ENCODE measurements at regions of chr3 and their contacts with region 1.

Region 1: DNA sequence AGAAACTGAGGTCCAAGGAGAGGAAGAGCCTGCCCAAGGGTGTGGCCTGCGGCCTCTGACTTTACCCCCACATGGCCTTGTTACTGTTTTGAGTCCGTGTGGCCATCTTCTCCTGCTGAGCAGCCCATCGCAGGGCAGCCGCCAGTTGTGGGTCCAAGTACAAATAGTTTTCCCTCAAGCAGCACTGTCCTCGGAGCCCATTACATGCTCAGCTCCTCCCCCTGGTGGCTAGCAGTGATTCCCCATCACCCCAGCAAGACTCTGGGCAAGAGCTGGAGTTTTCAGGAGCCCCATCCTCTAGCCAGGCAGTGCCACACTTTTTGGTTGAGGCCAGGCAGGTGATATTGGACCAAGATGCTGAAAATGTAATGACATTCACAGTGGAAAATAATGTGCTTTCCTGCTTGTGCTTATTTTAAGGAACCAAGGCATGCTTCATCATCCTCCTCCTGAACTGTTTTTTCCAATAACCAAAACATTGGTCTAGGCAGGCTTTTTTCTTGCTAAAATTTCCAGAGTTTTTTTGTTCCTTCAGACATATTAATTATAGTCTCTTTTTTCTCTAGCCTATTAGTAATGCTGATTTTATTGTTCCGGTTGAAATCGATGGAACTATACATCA is 23.2 kb upstream of the VILL start:
- DNase-seq: peak; percentile 56
- ATAC-seq: peak; percentile 83
- H3K4me3 ChIP-seq: no peak overlapping the region
- H3K27ac ChIP-seq: no peak overlapping the region
- H3K4me1 ChIP-seq: peaks cover 51% of the 10 kb centered on the region
- H3K27me3 ChIP-seq: no peaks in the 10 kb centered on the region
- CTCF ChIP-seq: peak; percentile 88
- EP300 ChIP-seq: no peak
- POLR2A ChIP-seq: no peak
- RAD21 ChIP-seq: peak; percentile 87

Region 2: DNA sequence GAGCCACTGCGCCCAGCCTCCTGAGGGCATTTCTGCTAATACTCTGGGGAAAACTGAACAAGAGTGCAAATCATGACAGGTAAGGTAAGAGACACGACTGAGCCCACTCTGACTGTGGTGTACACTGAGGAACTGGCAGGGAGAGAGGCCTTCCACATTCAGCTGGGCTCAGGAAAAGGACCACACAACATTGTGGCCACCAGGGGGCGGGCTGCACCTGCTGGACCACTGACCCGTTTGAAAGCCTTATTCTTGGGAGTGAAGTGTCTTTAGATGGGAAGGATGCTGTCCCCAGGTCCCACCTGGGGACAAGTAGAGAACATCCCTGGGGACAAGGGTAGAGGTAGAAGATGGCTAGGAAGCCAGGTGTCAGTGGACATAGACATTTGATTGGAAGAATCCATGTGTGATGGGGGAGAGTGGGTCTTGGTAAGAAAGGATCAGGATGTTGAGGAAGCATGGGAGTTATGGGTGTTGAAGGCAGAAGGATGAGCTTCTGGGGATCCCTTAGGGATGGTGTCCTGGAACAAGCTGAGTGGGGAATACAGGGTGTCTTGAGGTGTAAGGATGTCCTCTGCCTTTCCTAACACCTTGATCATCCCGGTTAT is 111.9 kb before region 1 on chr3:
- CTCF ChIA-PET with region 1: interaction called, 59 read pairs
- POLR2A ChIA-PET with region 1: interaction called, 18 read pairs
- in situ Hi-C with region 1: loop called (anchors 5 kb)
- intact Hi-C with region 1: loop called (anchors 1 kb)
- DNase-seq: peak; percentile 53
- ATAC-seq: peak; percentile 74
- H3K4me3 ChIP-seq: no peak overlapping the region
- H3K27ac ChIP-seq: no peak overlapping the region
- H3K4me1 ChIP-seq: peaks cover 12% of the 10 kb centered on the region
- H3K27me3 ChIP-seq: no peaks in the 10 kb centered on the region
- CTCF ChIP-seq: peak; percentile 98
- EP300 ChIP-seq: no peak
- POLR2A ChIP-seq: no peak
- RAD21 ChIP-seq: peak; percentile 90

Region 3: DNA sequence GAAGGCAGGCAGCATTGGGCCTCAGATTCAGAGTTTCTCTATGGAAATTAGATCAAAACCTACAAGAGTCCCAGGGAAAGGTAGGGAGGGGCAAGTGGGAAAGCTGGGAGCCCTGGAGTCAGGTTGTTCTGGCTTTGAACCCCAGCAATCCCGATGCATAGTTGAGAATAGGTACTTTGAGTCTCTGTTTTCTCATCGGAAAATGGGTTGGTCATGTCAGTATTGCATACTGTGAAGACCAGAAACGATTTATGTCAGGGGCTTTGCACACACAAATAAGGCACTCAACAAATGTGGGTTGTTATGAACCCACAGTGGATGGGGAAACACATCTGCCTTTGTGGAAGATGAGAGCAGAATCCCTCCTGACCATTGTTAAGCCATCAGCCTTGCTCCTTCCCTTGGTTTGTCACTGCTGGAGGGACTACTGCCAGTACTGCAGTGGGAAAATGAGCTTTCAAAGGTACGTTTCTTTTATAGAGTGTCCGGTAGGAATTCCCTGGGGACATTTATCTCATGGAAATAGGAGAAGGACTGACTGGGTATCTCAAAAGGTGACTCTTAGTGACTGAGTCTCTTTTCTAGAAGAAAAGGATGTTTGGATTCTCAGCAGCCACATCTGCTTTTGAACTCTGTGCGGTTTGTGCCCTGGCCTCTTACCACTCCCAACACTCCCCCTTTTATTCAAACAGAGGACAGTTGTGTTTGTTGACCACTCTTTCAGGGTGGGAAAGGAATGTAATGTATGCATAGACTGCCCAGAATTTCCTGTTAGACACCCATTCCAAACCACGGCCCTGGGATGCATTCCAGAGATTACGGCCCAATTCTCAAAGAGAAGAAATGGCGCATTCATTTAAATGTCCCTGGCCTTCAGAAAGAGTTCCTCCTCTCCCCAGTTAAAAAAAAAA is 31.4 kb before region 1 on chr3:
- CTCF ChIA-PET with region 1: no interaction called
- POLR2A ChIA-PET with region 1: interaction called, 14 read pairs
- in situ Hi-C with region 1: no loop called
- intact Hi-C with region 1: loop called (anchors 2 kb)
- DNase-seq: peak; percentile 98
- ATAC-seq: peak; percentile 97
- H3K4me3 ChIP-seq: peak overlapping the region in 1 of 3 experiments; percentile 41; a peak in 2 of 6 replicates
- H3K27ac ChIP-seq: peak overlapping the region; percentile 86
- H3K4me1 ChIP-seq: peaks cover 95% of the 10 kb centered on the region
- H3K27me3 ChIP-seq: no peaks in the 10 kb centered on the region
- CTCF ChIP-seq: no peak
- EP300 ChIP-seq: peak in 1 of 2 experiments; percentile 92; a peak in 2 of 4 replicates
- POLR2A ChIP-seq: peak in 1 of 2 experiments; percentile 52; a peak in 2 of 4 replicates
- RAD21 ChIP-seq: no peak

Measured in HepG2 (cell line).